A549 (cell line): ENCODE measurements at regions of chr12 and their contacts with region 1.

Region 1: GRCh38 chr12:122421821-122422729 is at the start of gene CLIP1:
- DNase-seq: peak; percentile 40 to 79
- ATAC-seq: peak; percentile 80 to 86
- H3K4me3 ChIP-seq: peak within 1 kb of the TSS; percentile 79
- H3K27ac ChIP-seq: peak within 1 kb of the TSS; percentile 100
- H3K4me1 ChIP-seq: peaks cover 48% of the 10 kb centered on the region
- CTCF ChIP-seq: peak; percentile 60
- EP300 ChIP-seq: no peak
- POLR2A ChIP-seq: peak; percentile 45; the same call in 1 of the 2 replicates
- RAD21 ChIP-seq: peak; percentile 58 to 78
- polyA plus RNA-seq, gene CLIP1: 133 and 149 TPM in 2 replicates

Region 2: GRCh38 chr12:122244565-122245371 is 177.3 kb before region 1 on chr12:
- CTCF ChIA-PET with region 1: no interaction called
- POLR2A ChIA-PET with region 1: no interaction called
- DNase-seq: no peak
- ATAC-seq: no peak
- H3K4me3 ChIP-seq: no peak overlapping the region
- H3K27ac ChIP-seq: no peak overlapping the region
- H3K4me1 ChIP-seq: no peaks in the 10 kb centered on the region
- CTCF ChIP-seq: no peak
- EP300 ChIP-seq: no peak
- POLR2A ChIP-seq: no peak
- RAD21 ChIP-seq: no peak

Region 3: DNA sequence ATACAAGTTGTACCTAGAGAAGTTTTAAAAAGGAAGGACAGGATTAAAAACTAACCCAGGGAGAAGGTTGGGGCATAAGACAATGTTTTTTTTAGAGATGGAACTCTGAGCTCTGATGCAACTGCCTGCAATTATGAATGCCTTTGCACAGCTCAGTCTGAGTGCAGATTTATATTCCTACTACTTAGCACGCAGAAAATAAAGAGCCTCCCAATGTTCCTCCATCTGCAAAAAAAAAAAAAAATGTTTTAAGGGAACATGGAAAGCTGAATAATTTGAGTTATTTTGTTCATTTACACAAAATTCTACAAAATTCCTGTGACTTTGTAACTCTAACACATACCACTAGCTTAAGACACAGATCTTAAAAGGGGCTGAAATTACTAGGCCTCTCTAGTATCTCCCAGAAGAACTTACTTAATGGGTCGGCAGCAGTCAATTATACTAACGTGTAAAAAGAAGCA is 15.3 kb before region 1 on chr12:
- CTCF ChIA-PET with region 1: interaction called, 79 read pairs
- POLR2A ChIA-PET with region 1: interaction called, 18 read pairs
- DNase-seq: peak in 1 of 2 experiments; percentile 74
- ATAC-seq: peak; percentile 63 to 92
- H3K4me3 ChIP-seq: no peak overlapping the region
- H3K27ac ChIP-seq: peak overlapping the region; percentile 92 to 98
- H3K4me1 ChIP-seq: peaks cover 53% of the 10 kb centered on the region
- CTCF ChIP-seq: no peak
- EP300 ChIP-seq: peak in 1 of 2 experiments; percentile 21; a peak in 1 of 5 replicates
- POLR2A ChIP-seq: no peak
- RAD21 ChIP-seq: no peak

Region 4: GRCh38 chr12:122481861-122482260 is 59.8 kb after region 1 on chr12:
- CTCF ChIA-PET with region 1: no interaction called
- POLR2A ChIA-PET with region 1: no interaction called
- DNase-seq: no peak
- ATAC-seq: no peak
- H3K4me3 ChIP-seq: no peak overlapping the region
- H3K27ac ChIP-seq: no peak overlapping the region
- H3K4me1 ChIP-seq: 0 out of 3 replicates have a peak, but pooled peaks cover 3% of the 10 kb centered on the region
- CTCF ChIP-seq: no peak
- EP300 ChIP-seq: no peak
- POLR2A ChIP-seq: no peak
- RAD21 ChIP-seq: no peak

Region 5: DNA sequence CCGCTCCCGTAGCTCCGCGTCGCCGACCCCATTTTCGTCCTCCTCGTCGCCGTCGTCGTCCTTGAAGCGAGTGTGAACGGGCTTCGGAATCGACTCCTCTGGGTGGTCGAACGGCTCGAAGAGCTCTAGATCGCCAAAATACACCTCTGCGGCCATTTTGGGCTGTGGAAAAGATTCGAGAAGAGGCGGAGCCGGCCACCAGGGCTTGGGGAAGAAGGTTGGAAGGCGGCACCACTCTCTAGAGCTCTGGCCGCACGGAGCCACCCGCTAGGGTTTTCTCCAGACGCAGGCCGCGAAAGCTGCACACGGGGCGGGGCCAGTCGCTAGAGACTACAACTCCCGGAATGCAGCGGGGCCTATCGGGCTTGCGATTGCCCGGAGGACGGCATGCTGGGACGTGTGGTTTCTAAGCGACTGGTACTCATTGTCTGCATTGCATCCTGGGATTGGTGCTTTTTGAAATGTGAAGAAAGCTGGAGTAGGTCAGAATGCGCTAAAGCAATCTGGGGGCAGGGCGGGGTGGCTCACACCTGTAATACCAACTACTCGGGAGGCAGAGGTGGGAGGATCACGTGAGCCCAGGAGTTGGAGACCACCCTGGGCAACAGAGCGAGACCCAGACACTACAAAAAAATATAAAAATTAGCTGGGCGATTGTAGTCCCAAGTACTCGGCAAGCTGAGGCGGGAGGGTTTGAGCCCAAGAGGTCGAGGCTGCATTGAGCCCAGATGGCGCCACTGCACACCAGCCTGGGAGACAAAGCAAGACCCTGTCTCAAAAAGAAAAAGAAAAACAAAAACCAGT is 78.8 kb after region 1 on chr12 and contains the start of gene ZCCHC8:
- CTCF ChIA-PET with region 1: interaction called, 4 read pairs
- POLR2A ChIA-PET with region 1: interaction called, 10 read pairs
- DNase-seq: peak; percentile 98 to 99
- ATAC-seq: peak; percentile 95 to 96
- H3K4me3 ChIP-seq: peak within 1 kb of the TSS; percentile 70
- H3K27ac ChIP-seq: peak within 1 kb of the TSS; percentile 94 to 98
- H3K4me1 ChIP-seq: peaks cover 20% of the 10 kb centered on the region
- CTCF ChIP-seq: peak; percentile 30
- EP300 ChIP-seq: no peak
- POLR2A ChIP-seq: peak; percentile 63
- RAD21 ChIP-seq: 0 out of 5 replicates have a peak, but pooled peaks of 1 of the 2 experiments have one; percentile 12
- polyA plus RNA-seq, gene ZCCHC8: 35.6 and 40.1 TPM in 2 replicates

Region 6: DNA sequence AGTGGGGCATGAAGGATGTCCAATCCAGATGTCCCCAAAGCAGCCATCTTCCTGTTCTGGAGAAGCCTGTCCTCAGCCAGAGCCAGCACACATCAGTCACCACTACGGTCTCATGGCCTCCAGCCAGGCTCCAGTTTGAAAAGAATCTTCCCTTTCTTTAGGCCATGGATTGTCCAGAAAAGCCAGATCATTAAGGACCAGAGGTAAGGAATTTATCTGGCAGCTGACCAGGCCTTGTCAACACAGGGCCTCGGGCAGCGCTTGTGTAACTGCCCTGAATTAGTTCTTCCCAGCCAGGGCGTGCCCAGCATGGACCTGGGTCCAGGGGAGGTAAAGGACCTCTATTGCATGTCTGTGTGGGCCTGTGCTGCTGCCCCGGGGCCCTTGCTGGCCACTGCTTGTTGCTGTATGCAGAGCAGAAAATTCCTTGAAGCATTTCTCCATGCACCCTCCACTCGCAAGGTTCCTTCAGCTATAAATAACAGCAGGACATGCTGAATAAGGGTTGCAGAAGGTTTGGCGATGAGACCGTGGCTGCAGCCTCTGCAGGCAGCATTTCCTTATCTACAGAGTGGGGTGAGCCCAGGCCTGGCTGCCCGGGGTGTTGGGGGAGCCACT is 495.5 kb after region 1 on chr12:
- CTCF ChIA-PET with region 1: no interaction called
- POLR2A ChIA-PET with region 1: no interaction called
- DNase-seq: peak in 1 of 2 experiments; percentile 60
- ATAC-seq: peak; percentile 64 to 72
- H3K4me3 ChIP-seq: no peak overlapping the region
- H3K27ac ChIP-seq: peak overlapping the region; percentile 55 to 59
- H3K4me1 ChIP-seq: peaks cover 15% of the 10 kb centered on the region
- CTCF ChIP-seq: no peak
- EP300 ChIP-seq: no peak
- POLR2A ChIP-seq: no peak
- RAD21 ChIP-seq: no peak